ENCODE measurements at regions of chr12 and their contacts with region 1.

Region 1: GRCh38 chr12:69738351-69739286 is at the start of gene RAB3IP:
- DNase-seq: peak; percentile 88
- H3K4me3 Mint-ChIP-seq: peak within 1 kb of the TSS; percentile 95
- H3K27ac Mint-ChIP-seq: peak within 1 kb of the TSS; percentile 92
- H3K4me1 Mint-ChIP-seq: peaks cover 31% of the 10 kb centered on the region
- H3K27me3 Mint-ChIP-seq: peaks cover 36% of the 10 kb centered on the region
- total RNA-seq, gene RAB3IP: 29.8 and 36.1 TPM in 2 replicates

Region 2: DNA sequence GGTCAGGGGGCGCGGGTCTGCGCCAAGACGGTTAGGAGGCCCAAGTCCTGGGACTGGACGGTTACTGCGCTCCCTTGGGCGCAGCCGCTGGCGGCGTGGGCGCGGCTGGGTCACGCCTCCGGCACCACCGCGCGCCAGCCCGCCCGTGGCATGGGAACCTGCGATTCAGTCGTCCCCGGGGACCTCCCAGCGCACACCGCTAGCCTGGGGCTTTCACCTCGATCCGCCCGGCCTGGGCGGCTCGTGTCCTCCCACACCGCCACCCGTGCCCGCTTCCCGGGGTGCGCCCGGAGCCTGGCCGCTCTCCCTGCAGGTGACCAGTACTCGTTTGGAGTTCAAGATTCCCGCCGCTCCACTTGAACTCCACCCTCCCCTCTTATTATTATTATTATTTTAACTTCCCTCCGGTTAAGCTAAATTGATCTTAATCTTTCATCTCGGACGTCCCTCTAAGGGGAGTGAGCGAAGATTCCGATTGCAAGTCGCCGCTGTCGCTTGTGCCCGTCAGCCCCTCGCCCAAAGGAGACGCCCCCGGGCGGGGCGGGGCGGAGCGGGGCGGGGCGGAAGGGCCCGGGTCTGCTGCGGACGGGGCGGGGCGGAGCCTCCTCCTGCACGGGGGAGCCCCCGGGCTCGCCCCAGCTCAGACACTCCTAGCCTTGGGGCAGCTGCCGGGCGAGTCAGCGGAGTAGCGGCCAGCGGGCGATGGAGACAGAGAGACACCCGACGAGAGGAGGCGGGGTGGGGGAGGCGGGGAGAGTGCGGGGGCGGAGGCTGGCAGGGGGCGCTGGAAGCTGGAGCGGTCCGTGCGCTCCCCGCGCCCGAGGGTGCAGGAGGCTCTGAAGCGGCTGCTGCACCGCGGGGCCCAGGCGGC is 627.3 kb after region 1 on chr12 and contains the start of gene KCNMB4:
- intact Hi-C with region 1: loop called (anchors 1 kb)
- DNase-seq: peak; percentile 71
- H3K4me3 Mint-ChIP-seq: peak within 1 kb of the TSS; percentile 87
- H3K27ac Mint-ChIP-seq: peak within 1 kb of the TSS; percentile 63
- H3K4me1 Mint-ChIP-seq: peaks cover 20% of the 10 kb centered on the region
- H3K27me3 Mint-ChIP-seq: peaks cover 44% of the 10 kb centered on the region
- total RNA-seq, gene KCNMB4: 0.17 and 0.80 TPM in 2 replicates